ENCODE measurements at regions of chr6 and their contacts with region 1.

Region 1: GRCh38 chr6:46541550-46541949 is 50.3 kb upstream of the RCAN2 start:
- DNase-seq: no peak
- ATAC-seq: no peak
- H3K4me3 ChIP-seq: no peak overlapping the region
- H3K27ac ChIP-seq: no peak overlapping the region
- H3K4me1 ChIP-seq: no peaks in the 10 kb centered on the region
- H3K27me3 ChIP-seq: no peaks in the 10 kb centered on the region
- CTCF ChIP-seq: no peak

Region 2: DNA sequence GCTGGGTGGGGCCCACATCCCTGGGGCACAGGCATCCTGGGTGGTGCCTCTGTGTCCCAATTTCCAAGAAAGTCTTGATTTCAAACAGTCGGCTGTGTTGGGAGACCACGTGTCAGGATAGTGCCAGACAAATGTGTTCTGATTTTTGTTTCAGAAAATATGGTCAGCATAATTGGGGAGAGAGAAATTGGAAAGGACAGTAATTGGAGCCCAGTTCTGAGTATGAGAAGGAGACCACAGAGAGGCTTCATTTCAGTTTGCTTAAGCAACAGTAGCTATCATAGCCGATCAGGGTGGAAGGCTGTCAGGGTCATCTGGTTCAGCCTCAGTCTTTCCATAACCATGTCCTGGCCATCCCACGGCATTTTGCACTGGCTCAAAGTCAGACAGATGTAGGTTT is 1933.4 kb before region 1 on chr6:
- CTCF ChIA-PET with region 1: no interaction called
- POLR2A ChIA-PET with region 1: interaction called, 12 read pairs
- in situ Hi-C with region 1: no loop called
- intact Hi-C with region 1: no loop called
- DNase-seq: no peak
- ATAC-seq: no peak
- H3K4me3 ChIP-seq: no peak overlapping the region
- H3K27ac ChIP-seq: no peak overlapping the region
- H3K4me1 ChIP-seq: no peaks in the 10 kb centered on the region
- H3K27me3 ChIP-seq: 0 out of 2 replicates have a peak, but pooled peaks cover 3% of the 10 kb centered on the region
- CTCF ChIP-seq: no peak

Measured in Panc1 (cell line).